ENCODE measurements at regions of chr7 and their contacts with region 1.

Region 1: GRCh38 chr7:33243319-33243881 is 114.0 kb downstream of the BBS9 start:
- DNase-seq: no peak
- ATAC-seq: peak in 2 of 4 donors; percentile 51 to 64
- H3K4me3 ChIP-seq: no peak overlapping the region
- H3K27ac ChIP-seq: no peak overlapping the region
- H3K4me1 ChIP-seq: peaks cover 0 to 2% (median 0%) of the 10 kb centered on the region in 12 donors
- H3K27me3 ChIP-seq: no peaks in the 10 kb centered on the region
- CTCF ChIP-seq: peak; percentile 31 to 78 (median 70)
- POLR2A ChIP-seq: no peak

Region 2: DNA sequence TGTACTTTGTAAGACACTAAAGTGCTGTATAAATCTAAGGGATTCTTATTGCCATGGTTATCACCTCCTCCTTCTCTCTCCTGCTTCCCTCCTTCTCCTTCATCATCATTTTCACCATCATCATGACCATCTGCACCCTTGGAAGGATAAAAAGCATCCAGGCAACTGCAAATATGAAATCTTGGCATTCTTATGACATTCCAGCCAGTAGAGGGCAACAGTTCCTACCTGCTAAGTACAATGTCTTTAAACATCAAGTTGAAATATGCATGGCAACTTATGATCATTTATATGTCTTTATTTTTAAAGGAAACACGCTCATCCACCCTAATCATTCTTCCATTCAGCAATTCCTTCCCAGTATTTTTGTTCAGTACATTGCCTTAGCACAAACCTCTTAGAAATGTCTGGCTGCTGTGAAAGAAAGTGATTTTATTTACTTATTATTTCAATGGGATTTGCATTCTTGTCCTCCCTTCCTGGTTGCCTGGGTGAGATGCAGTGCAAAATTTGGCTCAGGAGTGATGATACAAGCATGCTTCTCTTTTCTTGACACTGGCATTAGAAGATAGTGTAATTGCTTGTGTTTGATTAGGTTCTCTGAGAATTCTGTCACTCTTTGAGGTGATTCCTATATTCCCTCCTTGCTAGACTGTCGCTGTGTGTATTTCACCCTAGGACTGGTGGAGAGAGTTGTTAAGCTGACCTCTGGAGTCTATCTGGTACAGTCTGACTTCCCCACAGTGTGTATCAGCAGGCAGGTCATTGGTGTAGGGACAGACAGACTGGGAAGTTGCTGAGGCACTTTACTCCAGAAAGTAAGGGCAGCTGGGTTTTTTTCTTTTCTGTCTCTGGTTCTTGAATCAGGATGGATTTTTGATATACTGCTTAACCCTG is 473.4 kb after region 1 on chr7:
- intact Hi-C with region 1: loop called in 1 of 10 experiments (anchors 10 kb)
- DNase-seq: no peak
- ATAC-seq: no peak
- H3K4me3 ChIP-seq: no peak overlapping the region
- H3K27ac ChIP-seq: no peak overlapping the region
- H3K4me1 ChIP-seq: peaks cover 0 to 21% (median 5%) of the 10 kb centered on the region in 12 donors
- H3K27me3 ChIP-seq: no peaks in the 10 kb centered on the region
- CTCF ChIP-seq: peak; percentile 47 to 85 (median 68)
- POLR2A ChIP-seq: no peak

Region 3: GRCh38 chr7:33744293-33745075 is 501.1 kb after region 1 on chr7:
- intact Hi-C with region 1: loop called in 6 of 10 experiments (anchors 5 to 10 kb)
- DNase-seq: no peak
- ATAC-seq: no peak
- H3K4me3 ChIP-seq: no peak overlapping the region
- H3K27ac ChIP-seq: no peak overlapping the region
- H3K4me1 ChIP-seq: peaks cover 0 to 3% (median 0%) of the 10 kb centered on the region in 12 donors
- H3K27me3 ChIP-seq: no peaks in the 10 kb centered on the region
- CTCF ChIP-seq: peak in 9 of 12 donors; percentile 14 to 53 (median 30)
- POLR2A ChIP-seq: no peak